Heart left ventricle (tissue), 16 donors: ENCODE measurements at regions of chr19 and their contacts with region 1.

Region 1: DNA sequence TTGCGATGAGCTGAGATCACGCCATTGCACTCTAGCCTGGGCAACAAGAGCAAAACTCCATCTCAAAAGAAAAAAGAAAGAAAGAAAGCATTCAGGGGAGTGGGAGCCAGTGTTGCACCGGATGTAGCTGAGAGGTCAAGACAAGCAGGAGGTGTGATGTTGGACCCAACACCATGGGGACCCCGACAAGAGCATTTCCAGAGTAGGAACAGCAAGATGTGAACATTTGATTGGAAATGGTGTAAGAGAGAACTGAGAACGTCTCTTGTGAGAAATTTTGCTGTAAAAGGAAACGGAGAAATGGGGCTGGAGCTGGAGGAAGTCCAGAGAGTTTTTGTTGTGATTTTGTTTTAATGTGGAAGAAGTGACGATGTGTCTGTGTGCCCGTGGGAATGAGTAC is 15.8 kb upstream of the DPF1 start:
- DNase-seq: no peak
- ATAC-seq: no peak
- H3K4me3 ChIP-seq: no peak overlapping the region
- H3K27ac ChIP-seq: peak overlapping the region in 2 of 12 donors; percentile 34 to 38
- H3K4me1 ChIP-seq: peaks cover 0 to 10% (median 5%) of the 10 kb centered on the region in 12 donors
- H3K27me3 ChIP-seq: no peaks in the 10 kb centered on the region
- CTCF ChIP-seq: no peak
- POLR2A ChIP-seq: no peak

Region 2: GRCh38 chr19:37790244-37790925 is 449.4 kb before region 1 on chr19:
- intact Hi-C with region 1: no loop called
- DNase-seq: no peak
- ATAC-seq: no peak
- H3K4me3 ChIP-seq: no peak overlapping the region
- H3K27ac ChIP-seq: no peak overlapping the region
- H3K4me1 ChIP-seq: no peaks in the 10 kb centered on the region
- H3K27me3 ChIP-seq: no peaks in the 10 kb centered on the region
- CTCF ChIP-seq: no peak
- POLR2A ChIP-seq: no peak

Region 3: DNA sequence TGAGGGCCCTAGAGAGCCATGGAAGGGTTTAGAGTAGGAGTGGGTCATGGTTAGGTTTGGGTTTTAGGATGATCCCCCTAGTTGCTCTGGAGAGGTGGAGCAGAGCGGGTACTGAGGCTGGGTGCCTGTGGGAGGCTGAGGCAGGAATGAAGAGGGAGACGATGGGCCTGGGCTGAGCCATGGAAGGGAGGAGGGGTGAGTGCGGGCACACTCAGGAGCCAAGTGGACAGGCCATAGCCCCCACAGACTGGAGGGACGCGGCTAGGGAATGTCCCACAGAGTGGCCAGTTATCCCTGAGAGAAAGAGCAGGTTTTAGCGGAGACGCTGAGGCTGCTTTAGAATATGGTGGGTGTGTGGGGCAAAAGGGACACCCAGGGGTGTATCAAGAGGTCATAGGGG is 89.8 kb after region 1 on chr19:
- intact Hi-C with region 1: loop called in 6 of 10 experiments (anchors 2 to 5 kb)
- DNase-seq: no peak
- ATAC-seq: no peak
- H3K4me3 ChIP-seq: no peak overlapping the region
- H3K27ac ChIP-seq: no peak overlapping the region
- H3K4me1 ChIP-seq: no peaks in the 10 kb centered on the region
- H3K27me3 ChIP-seq: no peaks in the 10 kb centered on the region
- CTCF ChIP-seq: no peak
- POLR2A ChIP-seq: no peak